ENCODE measurements at regions of chr16 and their contacts with region 1.

Region 1: GRCh38 chr16:58317608-58318152 is 22.9 kb upstream of the PRSS54 start:
- DNase-seq: peak in 1 of 5 donors; percentile 25
- ATAC-seq: peak in 2 of 4 donors; percentile 43 to 62
- H3K4me3 ChIP-seq: no peak overlapping the region
- H3K27ac ChIP-seq: peak overlapping the region; percentile 18 to 83 (median 60)
- H3K4me1 ChIP-seq: peaks cover 0 to 25% (median 6%) of the 10 kb centered on the region in 12 donors
- H3K27me3 ChIP-seq: no peaks in the 10 kb centered on the region
- CTCF ChIP-seq: no peak
- POLR2A ChIP-seq: no peak

Region 2: DNA sequence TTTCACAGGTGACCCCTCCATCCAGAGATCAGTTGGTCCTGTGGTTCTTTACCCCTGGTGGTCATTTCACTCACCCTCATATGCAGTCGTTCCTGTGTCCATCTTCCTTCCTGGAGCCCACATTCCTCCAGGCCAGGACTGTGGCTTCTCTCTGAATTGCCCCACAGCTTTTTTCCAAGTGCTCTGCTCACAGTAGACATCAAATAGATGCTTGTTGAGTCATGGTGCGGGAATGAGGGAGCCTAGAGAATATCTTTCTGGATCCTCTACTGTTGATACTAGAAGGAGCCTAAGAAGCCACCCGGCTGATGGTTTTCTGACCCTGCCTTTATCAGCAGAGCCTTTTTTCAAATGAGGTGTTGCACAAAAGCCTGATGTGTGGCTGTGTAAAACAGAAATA is 306.0 kb before region 1 on chr16:
- intact Hi-C with region 1: loop called in 1 of 10 experiments (anchors 10 kb)
- DNase-seq: peak in 2 of 5 donors; percentile 0 to 1
- ATAC-seq: no peak
- H3K4me3 ChIP-seq: no peak overlapping the region
- H3K27ac ChIP-seq: no peak overlapping the region
- H3K4me1 ChIP-seq: peaks cover 0 to 7% (median 0%) of the 10 kb centered on the region in 12 donors
- H3K27me3 ChIP-seq: no peaks in the 10 kb centered on the region
- CTCF ChIP-seq: no peak
- POLR2A ChIP-seq: no peak

Measured in heart left ventricle (tissue), 16 donors.